ENCODE measurements at regions of chr5 and their contacts with region 1.

Region 1: GRCh38 chr5:145479271-145479670 is 355.9 kb downstream of the PRELID2 start:
- DNase-seq: no peak
- ATAC-seq: no peak
- H3K4me3 ChIP-seq: no peak overlapping the region
- H3K27ac ChIP-seq: no peak overlapping the region
- H3K4me1 ChIP-seq: no peaks in the 10 kb centered on the region
- H3K27me3 ChIP-seq: no peaks in the 10 kb centered on the region
- CTCF ChIP-seq: no peak

Region 2: GRCh38 chr5:145521066-145521465 is 41.8 kb after region 1 on chr5:
- CTCF ChIA-PET with region 1: no interaction called
- POLR2A ChIA-PET with region 1: interaction called, 14 read pairs
- in situ Hi-C with region 1: no loop called
- intact Hi-C with region 1: no loop called
- DNase-seq: no peak
- ATAC-seq: no peak
- H3K4me3 ChIP-seq: no peak overlapping the region
- H3K27ac ChIP-seq: no peak overlapping the region
- H3K4me1 ChIP-seq: no peaks in the 10 kb centered on the region
- H3K27me3 ChIP-seq: no peaks in the 10 kb centered on the region
- CTCF ChIP-seq: no peak